Activated B cell treated with CpG ODN at 0.5 μM for 24 hours (primary cell): ENCODE measurements at regions of chr2 and their contacts with region 1.

Region 1: DNA sequence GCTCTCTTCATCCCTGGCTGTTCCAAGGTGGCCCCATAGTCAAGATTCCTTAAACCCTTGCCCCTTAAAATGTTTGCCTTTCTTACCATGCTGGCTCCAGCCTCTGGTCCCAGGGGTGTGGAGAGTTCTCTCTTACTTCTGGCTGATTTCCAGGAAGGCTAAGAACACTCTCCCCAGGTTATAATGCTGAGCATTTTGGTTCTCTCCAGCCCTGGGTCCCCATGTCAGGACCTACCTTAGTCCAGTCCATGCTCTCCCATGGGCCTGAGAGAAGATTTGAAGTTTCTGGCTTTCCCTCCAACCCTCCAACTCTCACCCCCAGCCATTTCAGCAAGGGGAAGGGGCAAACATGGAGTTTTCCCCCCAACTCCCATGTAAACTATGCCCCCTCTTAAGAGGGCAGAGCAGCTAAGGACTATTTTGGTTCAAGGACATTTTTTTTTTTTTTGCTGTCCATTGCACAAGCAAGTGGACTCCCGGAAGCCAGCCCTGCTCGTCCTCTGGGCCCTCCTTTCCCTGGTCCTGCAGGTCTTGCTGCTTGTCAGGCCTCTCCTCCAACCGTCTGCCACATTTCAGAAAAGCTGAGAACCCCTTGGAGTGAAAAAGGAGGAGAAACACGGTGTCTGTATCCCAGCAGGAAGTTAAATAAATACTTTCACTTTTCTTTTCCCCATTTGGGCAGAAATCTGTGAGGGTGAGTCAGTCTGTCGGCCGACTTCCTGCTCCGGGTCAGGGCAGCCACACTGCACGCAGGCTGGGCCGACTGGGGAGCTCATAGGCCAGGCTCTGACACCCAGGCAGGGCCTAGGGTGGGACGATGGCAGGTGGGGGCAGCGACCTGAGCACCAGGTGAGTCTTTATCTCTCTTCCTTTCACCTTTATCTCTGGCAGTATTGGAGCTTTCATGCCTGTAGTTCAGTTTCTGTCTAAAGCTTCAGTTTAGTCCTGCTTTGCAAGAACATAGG is at the start of gene SP140L:
- DNase-seq: peak; percentile 60
- ATAC-seq: peak; percentile 95
- H3K4me3 Mint-ChIP-seq: peak within 1 kb of the TSS; percentile 96
- H3K27ac Mint-ChIP-seq: peak within 1 kb of the TSS; percentile 99
- H3K4me1 Mint-ChIP-seq: peaks cover 79% of the 10 kb centered on the region
- H3K27me3 Mint-ChIP-seq: no peaks in the 10 kb centered on the region
- CTCF ChIP-seq: no peak
- total RNA-seq, gene SP140L: 106 and 112 TPM in 2 replicates

Region 2: DNA sequence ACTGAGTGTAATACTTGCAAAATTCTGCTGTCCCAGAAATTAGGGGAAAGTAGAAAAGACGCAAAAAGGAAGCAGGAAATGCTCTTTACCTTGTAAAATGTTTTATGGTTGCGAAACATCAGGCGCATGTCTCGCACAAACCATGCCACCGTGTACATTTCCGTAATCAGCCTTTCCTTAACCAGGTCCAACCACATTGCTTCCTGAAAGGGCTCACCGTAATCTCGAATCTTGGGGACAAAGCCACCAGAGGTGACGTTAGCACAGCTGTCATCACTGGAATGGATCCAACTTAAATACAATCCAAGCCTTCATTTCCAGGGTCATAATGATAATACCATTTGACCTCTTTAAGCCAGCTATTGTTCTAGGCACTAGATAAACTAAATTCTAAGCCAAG is 156.2 kb before region 1 on chr2:
- CTCF ChIA-PET with region 1: no interaction called
- POLR2A ChIA-PET with region 1: no interaction called
- intact Hi-C with region 1: no loop called
- DNase-seq: no peak
- ATAC-seq: no peak
- H3K4me3 Mint-ChIP-seq: no peak overlapping the region
- H3K27ac Mint-ChIP-seq: no peak overlapping the region
- H3K4me1 Mint-ChIP-seq: no peaks in the 10 kb centered on the region
- H3K27me3 Mint-ChIP-seq: no peaks in the 10 kb centered on the region
- CTCF ChIP-seq: no peak

Region 3: GRCh38 chr2:230219419-230220331 is 107.1 kb before region 1 on chr2 and contains the start of gene SP110:
- CTCF ChIA-PET with region 1: no interaction called
- POLR2A ChIA-PET with region 1: interaction called, 12 read pairs
- intact Hi-C with region 1: no loop called
- DNase-seq: peak; percentile 61
- ATAC-seq: peak; percentile 73
- H3K4me3 Mint-ChIP-seq: peak within 1 kb of the TSS; percentile 96
- H3K27ac Mint-ChIP-seq: peak within 1 kb of the TSS; percentile 97
- H3K4me1 Mint-ChIP-seq: peaks cover 90% of the 10 kb centered on the region
- H3K27me3 Mint-ChIP-seq: no peaks in the 10 kb centered on the region
- CTCF ChIP-seq: no peak
- total RNA-seq, gene SP110: 139 and 147 TPM in 2 replicates

Region 4: DNA sequence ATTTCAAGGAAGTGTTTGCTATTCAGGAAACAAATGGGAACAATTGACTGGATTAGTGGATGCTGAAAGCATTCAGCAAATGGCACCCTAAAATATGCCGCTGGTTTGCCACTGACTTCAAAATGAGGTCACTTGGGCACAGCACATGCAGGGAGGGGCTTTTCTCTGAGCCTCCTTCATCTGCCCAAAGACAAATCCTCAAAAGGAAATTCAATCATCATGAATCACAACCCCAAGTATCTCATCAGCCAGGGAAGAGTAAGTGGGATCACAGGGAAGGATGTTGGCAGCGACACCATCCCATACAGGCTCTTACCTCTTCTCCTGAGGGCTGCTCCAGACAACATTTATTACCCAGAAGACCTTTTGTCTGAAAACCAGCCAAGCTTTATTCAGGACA is 14.1 kb before region 1 on chr2:
- CTCF ChIA-PET with region 1: no interaction called
- POLR2A ChIA-PET with region 1: interaction called, 36 read pairs
- intact Hi-C with region 1: no loop called
- DNase-seq: no peak
- ATAC-seq: no peak
- H3K4me3 Mint-ChIP-seq: no peak overlapping the region
- H3K27ac Mint-ChIP-seq: no peak overlapping the region
- H3K4me1 Mint-ChIP-seq: peaks cover 37% of the 10 kb centered on the region
- H3K27me3 Mint-ChIP-seq: no peaks in the 10 kb centered on the region
- CTCF ChIP-seq: no peak

Region 5: GRCh38 chr2:230447455-230448451 is 121.0 kb after region 1 on chr2:
- CTCF ChIA-PET with region 1: no interaction called
- POLR2A ChIA-PET with region 1: interaction called, 13 read pairs
- intact Hi-C with region 1: no loop called
- DNase-seq: no peak
- ATAC-seq: peak; percentile 81
- H3K4me3 Mint-ChIP-seq: peak overlapping the region; percentile 83
- H3K27ac Mint-ChIP-seq: peak overlapping the region; percentile 99
- H3K4me1 Mint-ChIP-seq: peaks cover 93% of the 10 kb centered on the region
- H3K27me3 Mint-ChIP-seq: no peaks in the 10 kb centered on the region
- CTCF ChIP-seq: no peak